Activated CD4-positive, alpha-beta T cell treated with anti-CD3 and anti-CD28 coated beads, Interleukin-2, amount 10 ng/mL, durations not matched to agents 7 days and 5 days (primary cell): ENCODE measurements at regions of chr1 and their contacts with region 1.

Region 1: DNA sequence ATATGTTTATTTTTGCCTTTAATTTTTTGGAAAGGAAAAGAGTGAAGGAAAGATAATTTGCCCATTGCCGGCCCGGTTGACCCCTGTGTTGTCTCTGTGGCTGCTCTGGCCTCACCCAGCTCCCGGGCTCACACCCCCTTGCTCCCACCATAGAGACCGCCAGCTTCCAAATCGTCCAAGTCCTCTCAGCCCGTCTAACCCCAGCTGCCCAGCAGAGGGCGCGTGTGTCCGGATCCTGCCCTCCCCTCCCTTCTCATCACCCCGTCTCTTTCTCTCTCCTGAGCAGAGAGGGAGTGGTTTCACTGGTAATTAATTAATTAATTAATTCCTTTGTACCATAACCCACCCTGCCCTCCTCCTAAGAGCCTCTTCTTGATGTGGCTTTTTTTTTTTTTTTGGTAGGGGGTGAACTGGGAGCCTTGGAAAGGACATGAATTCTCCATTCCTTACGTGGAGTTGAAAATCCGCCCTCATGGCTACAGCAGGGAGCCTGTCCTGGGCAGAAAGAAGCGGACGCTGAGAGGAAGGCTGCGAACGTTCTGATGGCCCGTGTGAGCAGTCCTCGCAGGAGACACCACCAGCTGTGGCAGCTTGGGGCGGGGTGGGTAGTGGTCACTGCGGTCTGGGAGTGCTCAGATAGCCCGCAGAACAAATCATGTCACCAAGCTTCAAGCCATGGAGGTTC is 45.9 kb downstream of the KIAA0040 start:
- DNase-seq: peak; percentile 75
- H3K4me3 Mint-ChIP-seq: no peak overlapping the region
- H3K27ac Mint-ChIP-seq: no peak overlapping the region
- H3K4me1 Mint-ChIP-seq: peaks cover 6% of the 10 kb centered on the region
- H3K27me3 Mint-ChIP-seq: peaks cover 22% of the 10 kb centered on the region

Region 2: GRCh38 chr1:175319418-175320230 is 173.0 kb after region 1 on chr1:
- CTCF ChIA-PET with region 1: interaction called, 55 read pairs
- POLR2A ChIA-PET with region 1: no interaction called
- DNase-seq: peak; percentile 74
- H3K4me3 Mint-ChIP-seq: no peak overlapping the region
- H3K27ac Mint-ChIP-seq: no peak overlapping the region
- H3K4me1 Mint-ChIP-seq: peaks cover 10% of the 10 kb centered on the region
- H3K27me3 Mint-ChIP-seq: peaks cover 21% of the 10 kb centered on the region